GM12878 (cell line): ENCODE measurements at regions of chr7 and their contacts with region 1.

Region 1: GRCh38 chr7:135710417-135711138 is 17.4 kb downstream of the SLC13A4 start:
- DNase-seq: no peak
- ATAC-seq: peak; percentile 76
- H3K4me3 ChIP-seq: no peak overlapping the region
- H3K27ac ChIP-seq: no peak overlapping the region
- H3K4me1 ChIP-seq: no peaks in the 10 kb centered on the region
- H3K27me3 ChIP-seq: no peaks in the 10 kb centered on the region
- CTCF ChIP-seq: peak; percentile 21 to 83 (median 45); a peak in 4 of 6 replicates
- EP300 ChIP-seq: no peak
- POLR2A ChIP-seq: no peak
- RAD21 ChIP-seq: 0 out of 2 replicates have a peak, but pooled peaks have one; percentile 3

Region 2: GRCh38 chr7:135690566-135690965 is 20.0 kb before region 1 on chr7:
- CTCF ChIA-PET with region 1: interaction called, 12 read pairs
- POLR2A ChIA-PET with region 1: no interaction called
- RAD21 ChIA-PET with region 1: no interaction called
- SMC1A ChIA-PET with region 1: no interaction called
- in situ Hi-C with region 1: no loop called
- intact Hi-C with region 1: no loop called
- DNase-seq: no peak
- ATAC-seq: no peak
- H3K4me3 ChIP-seq: no peak overlapping the region
- H3K27ac ChIP-seq: no peak overlapping the region
- H3K4me1 ChIP-seq: no peaks in the 10 kb centered on the region
- H3K27me3 ChIP-seq: no peaks in the 10 kb centered on the region
- CTCF ChIP-seq: no peak
- EP300 ChIP-seq: no peak
- POLR2A ChIP-seq: no peak
- RAD21 ChIP-seq: no peak

Region 3: GRCh38 chr7:135721198-135721820 is 10.7 kb after region 1 on chr7:
- CTCF ChIA-PET with region 1: interaction called, 11 read pairs
- POLR2A ChIA-PET with region 1: no interaction called
- RAD21 ChIA-PET with region 1: no interaction called
- SMC1A ChIA-PET with region 1: interaction called, 5 read pairs
- in situ Hi-C with region 1: no loop called
- intact Hi-C with region 1: no loop called
- DNase-seq: no peak
- ATAC-seq: no peak
- H3K4me3 ChIP-seq: no peak overlapping the region
- H3K27ac ChIP-seq: no peak overlapping the region
- H3K4me1 ChIP-seq: no peaks in the 10 kb centered on the region
- H3K27me3 ChIP-seq: no peaks in the 10 kb centered on the region; a peak in 1 of 4 replicates
- CTCF ChIP-seq: no peak
- EP300 ChIP-seq: no peak
- POLR2A ChIP-seq: no peak
- RAD21 ChIP-seq: no peak